ENCODE measurements at regions of chr9 and their contacts with region 1.

Region 1: GRCh38 chr9:106962615-106963363 is 99.8 kb downstream of the ZNF462 start:
- DNase-seq: peak; percentile 97
- H3K4me3 ChIP-seq: no peak overlapping the region
- H3K27ac ChIP-seq: peak overlapping the region; percentile 81
- H3K4me1 ChIP-seq: peaks cover 21% of the 10 kb centered on the region
- H3K27me3 ChIP-seq: no peaks in the 10 kb centered on the region
- CTCF ChIP-seq: no peak
- POLR2A ChIP-seq: no peak

Region 2: GRCh38 chr9:106799146-106799545 is 163.6 kb before region 1 on chr9:
- CTCF ChIA-PET with region 1: no interaction called
- POLR2A ChIA-PET with region 1: no interaction called
- dilution Hi-C with region 1: no loop called
- intact Hi-C with region 1: loop called (anchors 1 kb)
- DNase-seq: peak; percentile 81
- H3K4me3 ChIP-seq: no peak overlapping the region
- H3K27ac ChIP-seq: peak overlapping the region; percentile 88
- H3K4me1 ChIP-seq: peaks cover 18% of the 10 kb centered on the region
- H3K27me3 ChIP-seq: no peaks in the 10 kb centered on the region
- CTCF ChIP-seq: no peak
- POLR2A ChIP-seq: no peak

Region 3: DNA sequence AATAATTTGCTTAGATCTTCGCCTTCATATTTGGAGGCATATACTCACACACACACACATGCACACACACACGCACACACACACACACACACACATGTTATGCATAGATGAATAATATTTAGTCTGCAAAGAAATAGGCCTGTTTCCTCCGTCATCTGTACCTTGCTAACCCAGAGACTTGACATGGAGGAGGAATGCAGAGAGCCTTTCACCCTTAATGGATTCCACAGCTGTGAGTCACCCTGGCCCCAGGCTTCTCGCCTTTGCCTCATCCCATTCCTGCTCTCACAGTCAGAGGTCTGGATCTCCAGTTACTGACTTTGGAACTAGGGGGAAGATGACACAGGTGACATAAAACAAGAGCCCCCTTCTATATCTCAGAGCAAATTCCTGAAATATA is 70.2 kb before region 1 on chr9:
- CTCF ChIA-PET with region 1: no interaction called
- POLR2A ChIA-PET with region 1: no interaction called
- dilution Hi-C with region 1: no loop called
- intact Hi-C with region 1: loop called (anchors 1 kb)
- DNase-seq: peak; percentile 89
- H3K4me3 ChIP-seq: no peak overlapping the region
- H3K27ac ChIP-seq: peak overlapping the region; percentile 93
- H3K4me1 ChIP-seq: peaks cover 20% of the 10 kb centered on the region
- H3K27me3 ChIP-seq: no peaks in the 10 kb centered on the region
- CTCF ChIP-seq: no peak
- POLR2A ChIP-seq: no peak

Region 4: GRCh38 chr9:106916479-106917240 is 46.1 kb before region 1 on chr9:
- CTCF ChIA-PET with region 1: no interaction called
- POLR2A ChIA-PET with region 1: no interaction called
- dilution Hi-C with region 1: no loop called
- intact Hi-C with region 1: loop called (anchors 1 kb)
- DNase-seq: peak; percentile 89
- H3K4me3 ChIP-seq: peak overlapping the region in 1 of 3 experiments; percentile 19
- H3K27ac ChIP-seq: peak overlapping the region; percentile 92
- H3K4me1 ChIP-seq: peaks cover 33% of the 10 kb centered on the region
- H3K27me3 ChIP-seq: no peaks in the 10 kb centered on the region
- CTCF ChIP-seq: no peak
- POLR2A ChIP-seq: peak; percentile 29

Region 5: DNA sequence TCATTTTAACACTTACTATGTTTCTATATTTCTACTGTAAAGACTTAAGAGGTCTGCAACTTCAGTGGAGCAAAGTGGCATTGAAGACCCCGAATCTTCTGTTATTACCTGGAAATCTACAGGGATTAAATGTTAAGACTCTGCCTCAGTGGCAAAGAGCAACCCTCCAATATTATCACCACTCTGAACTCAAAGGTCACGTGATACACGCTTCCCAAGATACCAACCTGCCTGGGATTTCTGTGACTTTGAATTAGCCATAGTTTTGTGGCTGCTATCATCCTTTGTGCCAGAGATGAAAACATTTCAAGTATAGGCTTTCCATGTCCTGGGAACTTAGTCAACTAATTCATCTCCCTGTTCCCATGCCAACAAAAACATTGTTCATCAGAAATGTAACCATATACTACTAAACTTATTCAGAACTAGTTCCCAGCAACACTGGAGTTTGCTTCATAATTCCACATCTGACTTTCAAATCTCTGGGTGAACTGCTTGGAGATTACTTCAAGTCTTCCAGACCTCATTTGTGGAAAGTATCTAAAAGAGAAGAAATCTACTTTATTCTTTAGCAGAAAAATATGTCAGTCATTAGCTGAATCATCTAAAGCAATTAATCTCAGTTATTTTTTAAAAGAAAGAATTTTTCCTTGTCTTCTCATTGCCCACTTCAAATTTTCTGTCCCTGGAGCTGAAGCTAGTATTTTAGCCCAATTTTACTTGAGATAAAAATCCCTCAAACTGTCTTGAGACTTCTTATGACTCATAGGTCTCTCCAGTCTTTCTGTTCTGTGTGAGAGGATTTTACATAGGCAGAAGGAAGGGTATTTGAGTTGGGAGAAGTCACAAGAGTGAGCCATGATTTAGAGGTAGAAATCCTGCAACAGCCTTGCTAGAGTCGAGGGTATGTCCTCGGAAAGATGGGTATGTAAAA is 16.8 kb before region 1 on chr9:
- CTCF ChIA-PET with region 1: interaction called, 3 read pairs
- POLR2A ChIA-PET with region 1: no interaction called
- dilution Hi-C with region 1: no loop called
- intact Hi-C with region 1: loop called (anchors 2 kb)
- DNase-seq: peak; percentile 53
- H3K4me3 ChIP-seq: no peak overlapping the region
- H3K27ac ChIP-seq: peak overlapping the region; percentile 12
- H3K4me1 ChIP-seq: peaks cover 10% of the 10 kb centered on the region
- H3K27me3 ChIP-seq: no peaks in the 10 kb centered on the region
- CTCF ChIP-seq: no peak
- POLR2A ChIP-seq: no peak

Measured in endothelial cell of umbilical vein (primary cell).